ENCODE measurements at regions of chr7 and their contacts with region 1.

Region 1: DNA sequence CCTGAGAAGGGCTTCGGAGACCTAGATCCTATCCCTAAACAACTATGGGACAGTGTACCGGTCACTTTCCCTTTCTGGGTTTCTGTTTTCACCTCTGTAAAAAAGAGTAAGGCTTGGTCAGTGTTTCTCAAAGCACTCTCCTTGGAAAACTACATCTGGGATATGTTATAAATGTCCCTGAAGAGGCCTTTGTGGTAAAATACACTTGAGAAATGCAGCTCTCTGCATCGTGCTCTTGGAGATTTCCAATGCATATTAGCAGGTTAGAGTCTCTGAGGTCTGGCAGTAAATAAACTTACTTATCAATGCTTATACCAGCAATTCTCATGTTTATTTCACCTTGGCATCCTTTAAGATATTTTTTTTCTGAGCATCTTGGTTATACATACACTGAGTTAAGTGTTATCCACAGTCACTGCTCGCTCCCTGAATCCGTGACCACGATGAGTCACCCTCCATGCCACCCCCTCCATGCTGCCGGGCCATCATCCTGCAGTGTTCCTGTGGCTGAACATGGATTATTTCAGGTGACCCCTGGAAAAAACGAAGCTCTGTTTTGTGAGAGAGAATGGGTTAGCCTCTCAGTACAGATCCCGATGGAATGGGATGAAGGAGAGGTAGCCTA is 3.3 kb upstream of the TBXAS1 start:
- DNase-seq: no peak
- ATAC-seq: peak; percentile 77
- H3K4me3 ChIP-seq: no peak overlapping the region
- H3K27ac ChIP-seq: no peak overlapping the region
- H3K4me1 ChIP-seq: peaks cover 0 to 7% of the 10 kb centered on the region in 2 experiments; a peak in 2 of 4 replicates
- H3K27me3 ChIP-seq: peaks cover 21% of the 10 kb centered on the region; the same call in 1 of the 2 replicates
- CTCF ChIP-seq: no peak
- POLR2A ChIP-seq: no peak
- RAD21 ChIP-seq: no peak

Region 2: GRCh38 chr7:139183878-139184338 is 641.9 kb before region 1 on chr7:
- CTCF ChIA-PET with region 1: no interaction called
- POLR2A ChIA-PET with region 1: no interaction called
- RAD21 ChIA-PET with region 1: no interaction called
- intact Hi-C with region 1: no loop called
- DNase-seq: no peak
- ATAC-seq: no peak
- H3K4me3 ChIP-seq: no peak overlapping the region
- H3K27ac ChIP-seq: no peak overlapping the region
- H3K4me1 ChIP-seq: no peaks in the 10 kb centered on the region
- H3K27me3 ChIP-seq: no peaks in the 10 kb centered on the region
- CTCF ChIP-seq: no peak
- POLR2A ChIP-seq: no peak
- RAD21 ChIP-seq: no peak

Region 3: GRCh38 chr7:139645572-139646523 is 179.9 kb before region 1 on chr7:
- CTCF ChIA-PET with region 1: interaction called, 4 read pairs
- POLR2A ChIA-PET with region 1: no interaction called
- RAD21 ChIA-PET with region 1: no interaction called
- intact Hi-C with region 1: loop called (anchors 2 kb)
- DNase-seq: peak; percentile 63
- ATAC-seq: peak; percentile 96
- H3K4me3 ChIP-seq: no peak overlapping the region
- H3K27ac ChIP-seq: no peak overlapping the region
- H3K4me1 ChIP-seq: peaks cover 0 to 19% of the 10 kb centered on the region in 2 experiments; a peak in 1 of 4 replicates
- H3K27me3 ChIP-seq: no peaks in the 10 kb centered on the region
- CTCF ChIP-seq: peak; percentile 90 to 91 (median 91)
- POLR2A ChIP-seq: no peak
- RAD21 ChIP-seq: peak; percentile 98

Region 4: GRCh38 chr7:140358412-140359051 is 532.8 kb after region 1 on chr7:
- CTCF ChIA-PET with region 1: no interaction called
- POLR2A ChIA-PET with region 1: no interaction called
- RAD21 ChIA-PET with region 1: no interaction called
- intact Hi-C with region 1: no loop called
- DNase-seq: no peak
- ATAC-seq: no peak
- H3K4me3 ChIP-seq: no peak overlapping the region
- H3K27ac ChIP-seq: no peak overlapping the region
- H3K4me1 ChIP-seq: no peaks in the 10 kb centered on the region
- H3K27me3 ChIP-seq: no peaks in the 10 kb centered on the region
- CTCF ChIP-seq: no peak
- POLR2A ChIP-seq: no peak
- RAD21 ChIP-seq: no peak

Region 5: DNA sequence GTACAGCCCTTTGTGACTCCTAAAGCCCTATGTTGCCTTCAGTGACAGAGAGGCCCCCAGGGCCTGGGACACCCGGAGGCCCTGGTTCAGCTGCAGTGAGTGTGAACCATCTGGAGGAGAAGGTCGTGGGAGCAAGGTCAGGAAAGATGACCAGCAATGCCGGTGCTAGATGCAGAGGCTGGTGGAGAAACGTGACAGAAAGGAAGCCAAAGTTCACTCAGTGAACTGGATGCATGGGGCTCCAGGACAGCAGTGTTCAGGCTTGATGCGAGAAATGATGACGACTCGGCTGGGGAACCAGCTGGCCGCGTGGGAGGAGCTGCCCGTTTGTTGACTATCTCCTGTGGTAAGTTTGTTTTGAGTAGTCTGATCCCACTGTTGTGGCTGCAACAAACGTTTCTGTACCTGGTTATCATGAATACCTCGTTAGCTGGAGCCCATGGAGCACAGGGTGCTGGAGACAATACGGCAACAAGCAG is 707.7 kb after region 1 on chr7:
- CTCF ChIA-PET with region 1: no interaction called
- POLR2A ChIA-PET with region 1: no interaction called
- RAD21 ChIA-PET with region 1: no interaction called
- intact Hi-C with region 1: no loop called
- DNase-seq: no peak
- ATAC-seq: no peak
- H3K4me3 ChIP-seq: no peak overlapping the region
- H3K27ac ChIP-seq: no peak overlapping the region
- H3K4me1 ChIP-seq: no peaks in the 10 kb centered on the region
- H3K27me3 ChIP-seq: no peaks in the 10 kb centered on the region
- CTCF ChIP-seq: no peak
- POLR2A ChIP-seq: no peak
- RAD21 ChIP-seq: no peak

Measured in HCT116 (cell line).